ENCODE measurements at regions of chr13 and their contacts with region 1.

Region 1: DNA sequence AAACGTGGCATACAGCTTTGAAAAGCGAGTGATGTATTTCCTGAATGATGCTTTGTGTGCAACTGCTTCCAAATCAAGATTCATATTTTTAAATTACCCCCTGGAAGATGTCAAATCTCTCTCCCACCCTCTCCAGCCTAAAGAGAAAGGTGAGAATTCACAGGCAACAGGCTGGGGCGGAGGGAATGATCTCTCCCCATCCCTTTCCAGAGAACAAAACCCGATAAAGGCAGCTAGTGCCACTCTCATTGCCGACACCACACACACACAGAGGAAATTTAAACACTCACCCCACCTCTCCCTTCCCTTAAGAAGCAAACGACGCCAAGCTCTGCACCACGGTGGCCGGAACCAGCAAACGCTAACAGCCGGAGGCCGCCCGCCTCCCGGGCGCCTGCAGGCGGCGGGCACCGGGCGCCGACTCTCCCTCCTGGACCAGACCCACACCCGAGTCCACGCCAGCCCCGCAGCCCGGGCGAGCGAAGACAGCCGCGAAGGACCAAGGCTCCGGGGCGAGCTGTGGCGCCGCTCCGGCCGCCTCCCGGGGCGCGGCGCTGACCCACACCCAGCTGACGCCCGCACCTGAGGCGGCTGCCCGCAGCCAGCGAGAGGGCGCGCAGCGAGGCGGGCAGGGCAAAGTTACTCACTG is 477 bp downstream of the LNX2 start:
- DNase-seq: peak; percentile 34
- H3K4me3 Mint-ChIP-seq: peak overlapping the region; percentile 87
- H3K27ac Mint-ChIP-seq: peak overlapping the region; percentile 30
- H3K4me1 Mint-ChIP-seq: peaks cover 38% of the 10 kb centered on the region
- H3K27me3 Mint-ChIP-seq: no peaks in the 10 kb centered on the region
- CTCF ChIP-seq: peak; percentile 15

Region 2: GRCh38 chr13:27578121-27579030 is 41.5 kb before region 1 on chr13:
- CTCF ChIA-PET with region 1: no interaction called
- intact Hi-C with region 1: loop called (anchors 5 kb)
- DNase-seq: no peak
- H3K4me3 Mint-ChIP-seq: no peak overlapping the region
- H3K27ac Mint-ChIP-seq: no peak overlapping the region
- H3K4me1 Mint-ChIP-seq: peaks cover 7% of the 10 kb centered on the region
- H3K27me3 Mint-ChIP-seq: no peaks in the 10 kb centered on the region
- CTCF ChIP-seq: no peak

Region 3: GRCh38 chr13:27678306-27679040 is 58.6 kb after region 1 on chr13:
- CTCF ChIA-PET with region 1: no interaction called
- intact Hi-C with region 1: no loop called
- DNase-seq: no peak
- H3K4me3 Mint-ChIP-seq: no peak overlapping the region
- H3K27ac Mint-ChIP-seq: no peak overlapping the region
- H3K4me1 Mint-ChIP-seq: no peaks in the 10 kb centered on the region
- H3K27me3 Mint-ChIP-seq: peaks cover 38% of the 10 kb centered on the region
- CTCF ChIP-seq: no peak

Measured in Calu3 (cell line).